CD4-positive, alpha-beta memory T cell (primary cell): ENCODE measurements at regions of chr17 and their contacts with region 1.

Region 1: GRCh38 chr17:8222630-8223356 is 12.4 kb upstream of the AURKB start:
- DNase-seq: peak; percentile 88 to 91 (median 90)
- H3K4me3 ChIP-seq: peak overlapping the region; percentile 63 to 99
- H3K4me3 Mint-ChIP-seq: peak overlapping the region; percentile 93 to 98 (median 94)
- H3K27ac ChIP-seq: peak overlapping the region; percentile 89
- H3K27ac Mint-ChIP-seq: peak overlapping the region; percentile 97 to 100 (median 98)
- H3K4me1 ChIP-seq: peaks cover 51% of the 10 kb centered on the region
- H3K4me1 Mint-ChIP-seq: peaks cover 36 to 85% (median 69%) of the 10 kb centered on the region in 4 donors
- H3K27me3 ChIP-seq: no peaks in the 10 kb centered on the region
- H3K27me3 Mint-ChIP-seq: peaks cover 4 to 21% of the 10 kb centered on the region in 2 donors

Region 2: DNA sequence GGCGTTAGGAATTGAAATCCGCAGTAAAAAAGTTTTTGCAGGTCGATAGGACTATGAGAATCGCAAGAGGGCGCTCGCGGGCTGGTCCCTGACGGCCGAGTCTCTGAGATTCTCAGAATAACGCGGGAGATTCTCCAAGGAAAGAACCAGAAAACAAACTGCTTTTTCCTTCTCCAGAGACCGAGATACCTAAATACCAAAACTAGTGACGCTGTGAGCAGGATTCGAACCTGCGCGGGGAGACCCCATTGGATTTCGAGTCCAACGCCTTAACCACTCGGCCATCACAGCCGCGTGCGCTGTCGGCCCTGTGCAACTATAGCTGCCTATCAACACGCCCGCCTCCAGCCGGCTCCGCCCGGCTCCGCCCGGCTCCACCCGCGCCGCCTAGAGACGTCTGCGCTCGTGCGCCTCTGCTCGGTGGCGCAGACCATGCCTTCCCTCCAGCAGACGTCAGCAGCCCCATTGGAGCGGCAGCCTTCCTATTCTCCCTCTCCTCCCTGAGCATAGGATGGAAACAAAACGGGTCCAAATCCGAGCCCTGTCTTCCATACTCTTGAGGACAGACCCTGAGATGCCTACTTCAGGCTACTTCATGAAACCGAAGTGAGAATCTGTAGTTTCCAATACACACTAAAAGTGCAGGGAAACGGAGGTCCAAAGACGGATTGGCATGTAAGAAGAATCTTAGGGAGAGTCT is 84.0 kb before region 1 on chr17:
- CTCF ChIA-PET with region 1: interaction called, 16 read pairs
- POLR2A ChIA-PET with region 1: interaction called, 79 read pairs
- intact Hi-C with region 1: loop called (anchors 1 kb)
- DNase-seq: peak; percentile 95 to 98 (median 96)
- H3K4me3 ChIP-seq: peak overlapping the region; percentile 60 to 74
- H3K4me3 Mint-ChIP-seq: no peak overlapping the region
- H3K27ac ChIP-seq: peak overlapping the region; percentile 78
- H3K27ac Mint-ChIP-seq: no peak overlapping the region
- H3K4me1 ChIP-seq: peaks cover 20% of the 10 kb centered on the region
- H3K4me1 Mint-ChIP-seq: peaks cover 0 to 8% (median 3%) of the 10 kb centered on the region in 4 donors
- H3K27me3 ChIP-seq: no peaks in the 10 kb centered on the region
- H3K27me3 Mint-ChIP-seq: no peaks in the 10 kb centered on the region

Region 3: DNA sequence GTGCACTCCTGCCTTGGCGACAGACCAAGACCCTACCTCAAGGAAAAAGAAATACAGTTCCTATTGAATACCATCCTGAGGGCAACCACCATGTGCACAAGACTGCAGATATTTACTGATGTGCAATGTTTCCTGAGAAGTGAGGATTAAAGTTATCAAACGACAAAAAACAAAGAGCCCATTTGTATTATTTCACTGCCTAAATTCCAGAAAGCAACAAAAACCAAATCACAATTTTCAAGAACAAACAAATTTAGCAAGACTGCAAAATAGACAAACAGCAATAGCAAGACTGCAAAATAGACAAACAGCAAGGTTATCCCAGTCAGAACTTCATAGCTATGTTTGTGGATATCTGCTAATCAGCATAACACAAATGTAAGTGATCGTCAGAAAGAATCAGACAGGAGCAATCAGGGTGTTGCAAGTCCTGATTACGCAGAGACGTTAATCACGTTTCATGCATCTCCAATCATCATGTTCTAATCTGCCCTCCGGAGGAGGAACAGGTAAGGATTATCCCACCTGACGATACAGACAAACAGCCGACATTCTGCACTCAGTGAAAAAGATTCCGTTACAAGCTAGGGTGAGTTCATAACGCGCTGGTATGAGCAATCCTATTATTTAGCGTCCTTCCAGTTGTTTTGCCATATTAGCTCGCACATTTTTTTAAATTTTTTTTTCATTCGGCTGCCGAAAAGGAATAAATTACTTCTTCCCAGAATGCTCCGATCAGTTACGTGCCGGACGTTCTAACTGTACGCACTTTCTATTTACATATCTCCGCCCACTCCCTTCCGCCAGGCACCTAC is 49.5 kb before region 1 on chr17:
- CTCF ChIA-PET with region 1: interaction called, 3 read pairs
- POLR2A ChIA-PET with region 1: interaction called, 84 read pairs
- intact Hi-C with region 1: loop called (anchors 1 kb)
- DNase-seq: peak; percentile 91 to 94 (median 92)
- H3K4me3 ChIP-seq: peak overlapping the region; percentile 12 to 52
- H3K4me3 Mint-ChIP-seq: peak overlapping the region; percentile 84 to 94 (median 90)
- H3K27ac ChIP-seq: peak overlapping the region; percentile 99
- H3K27ac Mint-ChIP-seq: peak overlapping the region; percentile 98 to 100 (median 100)
- H3K4me1 ChIP-seq: peaks cover 45% of the 10 kb centered on the region
- H3K4me1 Mint-ChIP-seq: peaks cover 30 to 61% (median 43%) of the 10 kb centered on the region in 4 donors
- H3K27me3 ChIP-seq: no peaks in the 10 kb centered on the region
- H3K27me3 Mint-ChIP-seq: no peaks in the 10 kb centered on the region

Region 4: GRCh38 chr17:8209909-8210760 is 12.7 kb before region 1 on chr17 and contains the start of gene AURKB:
- CTCF ChIA-PET with region 1: interaction called, 5 read pairs
- POLR2A ChIA-PET with region 1: interaction called, 74 read pairs
- intact Hi-C with region 1: loop called (anchors 1 kb)
- DNase-seq: peak; percentile 90 to 98 (median 90)
- H3K4me3 ChIP-seq: peak within 1 kb of the TSS; percentile 71 to 83
- H3K4me3 Mint-ChIP-seq: peak within 1 kb of the TSS; percentile 85 to 96 (median 92)
- H3K27ac ChIP-seq: peak within 1 kb of the TSS; percentile 69
- H3K27ac Mint-ChIP-seq: peak within 1 kb of the TSS; percentile 82 to 95 (median 94)
- H3K4me1 ChIP-seq: peaks cover 15% of the 10 kb centered on the region
- H3K4me1 Mint-ChIP-seq: peaks cover 13 to 21% (median 17%) of the 10 kb centered on the region in 4 donors
- H3K27me3 ChIP-seq: no peaks in the 10 kb centered on the region
- H3K27me3 Mint-ChIP-seq: no peaks in the 10 kb centered on the region
- total RNA-seq, gene AURKB: 0.67 to 0.83 TPM

Region 5: DNA sequence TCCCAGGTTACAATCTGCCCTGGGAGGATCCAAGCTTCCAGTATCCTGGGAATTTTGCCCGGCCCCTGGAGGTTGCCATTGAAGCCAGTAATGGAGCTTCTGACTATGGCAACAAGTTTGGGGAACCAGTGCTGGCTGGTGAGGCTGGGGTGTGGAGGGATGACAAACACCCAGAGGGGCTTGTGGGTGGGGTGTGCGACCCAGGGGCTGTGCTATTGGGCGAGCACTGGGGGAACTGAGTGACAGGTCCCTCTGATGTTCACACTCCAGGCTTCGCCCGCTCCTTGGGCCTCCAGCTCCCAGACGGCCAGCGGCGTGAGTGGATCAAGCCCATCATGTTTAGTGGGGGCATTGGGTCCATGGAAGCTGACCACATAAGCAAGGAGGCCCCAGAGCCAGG is 35.0 kb after region 1 on chr17:
- CTCF ChIA-PET with region 1: no interaction called
- POLR2A ChIA-PET with region 1: no interaction called
- intact Hi-C with region 1: no loop called
- DNase-seq: no peak
- H3K4me3 ChIP-seq: no peak overlapping the region
- H3K4me3 Mint-ChIP-seq: no peak overlapping the region
- H3K27ac ChIP-seq: no peak overlapping the region
- H3K27ac Mint-ChIP-seq: no peak overlapping the region
- H3K4me1 ChIP-seq: no peaks in the 10 kb centered on the region
- H3K4me1 Mint-ChIP-seq: no peaks in the 10 kb centered on the region
- H3K27me3 ChIP-seq: no peaks in the 10 kb centered on the region
- H3K27me3 Mint-ChIP-seq: no peaks in the 10 kb centered on the region

Region 6: GRCh38 chr17:8283356-8283755 is 60.6 kb after region 1 on chr17:
- CTCF ChIA-PET with region 1: interaction called, 3 read pairs
- POLR2A ChIA-PET with region 1: interaction called, 37 read pairs
- intact Hi-C with region 1: loop called (anchors 1 kb)
- DNase-seq: peak in 1 of 5 donors; percentile 12
- H3K4me3 ChIP-seq: no peak overlapping the region
- H3K4me3 Mint-ChIP-seq: peak overlapping the region in 4 of 8 donors; percentile 12 to 56 (median 40)
- H3K27ac ChIP-seq: no peak overlapping the region
- H3K27ac Mint-ChIP-seq: peak overlapping the region; percentile 29 to 92 (median 85)
- H3K4me1 ChIP-seq: peaks cover 37% of the 10 kb centered on the region
- H3K4me1 Mint-ChIP-seq: peaks cover 15 to 49% (median 27%) of the 10 kb centered on the region in 4 donors
- H3K27me3 ChIP-seq: no peaks in the 10 kb centered on the region
- H3K27me3 Mint-ChIP-seq: no peaks in the 10 kb centered on the region

Region 7: GRCh38 chr17:8300627-8301242 is 77.9 kb after region 1 on chr17:
- CTCF ChIA-PET with region 1: interaction called, 38 read pairs
- POLR2A ChIA-PET with region 1: interaction called, 107 read pairs
- intact Hi-C with region 1: loop called (anchors 1 kb)
- DNase-seq: peak; percentile 62 to 76 (median 72)
- H3K4me3 ChIP-seq: no peak overlapping the region
- H3K4me3 Mint-ChIP-seq: peak overlapping the region in 2 of 8 donors; percentile 2
- H3K27ac ChIP-seq: no peak overlapping the region
- H3K27ac Mint-ChIP-seq: peak overlapping the region in 6 of 7 donors; percentile 47 to 90 (median 83)
- H3K4me1 ChIP-seq: peaks cover 7% of the 10 kb centered on the region
- H3K4me1 Mint-ChIP-seq: peaks cover 7 to 16% (median 11%) of the 10 kb centered on the region in 4 donors
- H3K27me3 ChIP-seq: no peaks in the 10 kb centered on the region
- H3K27me3 Mint-ChIP-seq: peaks cover 0 to 1% of the 10 kb centered on the region in 2 donors